ENCODE measurements at regions of chr12 and their contacts with region 1.

Region 1: DNA sequence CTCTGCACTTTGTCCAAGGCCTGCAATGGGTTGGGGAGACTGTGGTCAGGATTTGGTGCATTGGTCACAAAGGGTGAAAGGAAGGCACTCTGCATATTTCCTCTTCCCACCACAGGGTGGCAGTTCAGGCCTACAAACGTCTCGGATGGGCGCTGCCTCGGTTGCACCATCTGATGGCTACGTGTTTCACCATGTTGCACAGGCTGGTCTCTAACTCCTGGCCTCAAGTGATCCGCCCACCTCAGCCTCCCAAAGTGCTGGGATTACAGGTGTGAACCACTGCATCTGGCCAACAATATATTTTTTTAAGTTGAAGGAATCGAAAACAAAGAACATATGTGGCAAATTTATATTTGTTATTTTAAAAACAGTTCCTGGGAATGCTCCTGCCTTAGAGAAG is 35.1 kb downstream of the TMBIM6 start:
- DNase-seq: peak; percentile 72
- ATAC-seq: peak; percentile 91
- H3K4me3 ChIP-seq: no peak overlapping the region
- H3K27ac ChIP-seq: no peak overlapping the region
- H3K4me1 ChIP-seq: peaks cover 0 to 9% of the 10 kb centered on the region in 2 experiments; a peak in 3 of 4 replicates
- H3K27me3 ChIP-seq: peaks cover 4% of the 10 kb centered on the region; the same call in 1 of the 2 replicates
- CTCF ChIP-seq: peak; percentile 79 to 93 (median 80)
- POLR2A ChIP-seq: no peak
- RAD21 ChIP-seq: peak; percentile 95

Region 2: DNA sequence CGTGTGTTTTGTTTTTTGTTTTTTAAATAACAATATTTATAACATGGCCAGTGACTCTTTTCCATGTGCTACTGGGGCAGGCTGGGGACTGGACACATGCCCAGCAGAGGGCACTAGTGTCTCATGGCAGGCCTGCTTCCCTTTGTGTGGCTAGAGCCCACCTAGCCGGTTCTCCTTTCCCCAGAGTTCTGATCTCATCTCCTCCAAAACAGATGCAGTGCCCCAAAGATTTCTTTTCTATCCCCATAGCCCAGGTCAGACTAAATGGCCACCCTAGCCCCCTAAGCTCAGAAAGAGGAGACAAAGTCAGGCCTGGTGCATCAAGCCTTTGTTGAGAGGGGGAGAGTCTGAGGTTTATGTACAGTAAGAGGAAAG is 131.8 kb before region 1 on chr12:
- CTCF ChIA-PET with region 1: interaction called, 5 read pairs
- POLR2A ChIA-PET with region 1: no interaction called
- RAD21 ChIA-PET with region 1: interaction called in 1 of 2 experiments, 3 read pairs
- intact Hi-C with region 1: loop called (anchors 1 kb)
- DNase-seq: peak; percentile 21
- ATAC-seq: peak; percentile 87
- H3K4me3 ChIP-seq: no peak overlapping the region
- H3K27ac ChIP-seq: no peak overlapping the region
- H3K4me1 ChIP-seq: peaks cover 0 to 4% of the 10 kb centered on the region in 2 experiments; a peak in 2 of 4 replicates
- H3K27me3 ChIP-seq: no peaks in the 10 kb centered on the region
- CTCF ChIP-seq: peak; percentile 89 to 96 (median 90)
- POLR2A ChIP-seq: no peak
- RAD21 ChIP-seq: peak; percentile 95

Region 3: GRCh38 chr12:49787672-49788071 is 11.3 kb after region 1 on chr12:
- CTCF ChIA-PET with region 1: interaction called, 10 read pairs
- POLR2A ChIA-PET with region 1: interaction called, 4 read pairs
- RAD21 ChIA-PET with region 1: no interaction called
- intact Hi-C with region 1: no loop called
- DNase-seq: no peak
- ATAC-seq: no peak
- H3K4me3 ChIP-seq: no peak overlapping the region
- H3K27ac ChIP-seq: no peak overlapping the region
- H3K4me1 ChIP-seq: peaks cover 0 to 9% of the 10 kb centered on the region in 2 experiments; a peak in 2 of 4 replicates
- H3K27me3 ChIP-seq: no peaks in the 10 kb centered on the region
- CTCF ChIP-seq: no peak
- POLR2A ChIP-seq: no peak
- RAD21 ChIP-seq: no peak

Region 4: GRCh38 chr12:49838973-49839633 is 62.7 kb after region 1 on chr12:
- CTCF ChIA-PET with region 1: interaction called, 28 read pairs
- POLR2A ChIA-PET with region 1: interaction called, 6 read pairs
- RAD21 ChIA-PET with region 1: interaction called in 1 of 2 experiments, 3 read pairs
- intact Hi-C with region 1: loop called (anchors 1 kb)
- DNase-seq: peak; percentile 22
- ATAC-seq: peak; percentile 30; the same call in 1 of the 2 replicates
- H3K4me3 ChIP-seq: no peak overlapping the region
- H3K27ac ChIP-seq: no peak overlapping the region
- H3K4me1 ChIP-seq: peaks cover 12 to 19% of the 10 kb centered on the region in 2 experiments; a peak in 3 of 4 replicates
- H3K27me3 ChIP-seq: no peaks in the 10 kb centered on the region
- CTCF ChIP-seq: peak; percentile 61 to 84 (median 66); a peak in 5 of 6 replicates
- POLR2A ChIP-seq: no peak
- RAD21 ChIP-seq: peak; percentile 85

Region 5: DNA sequence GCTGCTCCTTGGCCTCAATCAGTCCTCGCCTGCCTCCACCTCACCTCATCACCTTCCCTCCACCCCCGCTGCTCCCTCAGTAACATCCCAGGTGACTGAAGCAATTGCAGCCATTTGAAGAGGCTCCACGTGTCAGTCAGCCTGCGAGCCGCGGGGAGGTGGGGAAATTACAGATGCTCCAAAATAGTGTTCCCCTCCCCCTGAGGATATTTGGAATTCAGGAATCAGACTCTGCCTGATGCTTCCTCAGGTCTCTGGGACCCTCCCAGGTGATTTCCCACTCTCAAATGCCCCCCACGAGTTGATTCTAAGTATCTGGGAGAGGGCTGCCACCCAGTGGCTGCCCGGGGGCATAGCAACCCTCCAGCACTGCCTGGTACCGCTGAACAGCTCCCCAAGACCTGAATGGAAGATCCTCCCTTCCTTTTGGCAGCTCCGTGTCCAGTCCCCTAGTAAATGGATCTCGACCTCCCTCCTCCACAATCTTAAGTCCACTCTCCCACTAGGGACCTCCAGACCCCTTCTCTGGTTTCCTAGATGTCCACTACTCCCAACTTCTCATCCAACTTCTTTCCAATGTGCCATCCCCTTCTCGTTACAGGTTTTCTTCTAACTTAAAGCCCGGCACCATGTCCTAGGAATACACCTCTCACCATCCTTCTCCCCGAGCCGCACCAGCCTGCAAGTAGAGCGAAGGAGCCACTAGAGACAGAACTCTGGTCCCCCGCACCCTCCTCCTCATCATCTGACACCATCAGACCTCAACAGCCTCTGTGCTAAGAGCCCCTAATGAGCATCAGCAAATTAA is 279.6 kb after region 1 on chr12:
- CTCF ChIA-PET with region 1: interaction called, 11 read pairs
- POLR2A ChIA-PET with region 1: no interaction called
- RAD21 ChIA-PET with region 1: no interaction called
- intact Hi-C with region 1: loop called (anchors 1 kb)
- DNase-seq: peak; percentile 48
- ATAC-seq: peak; percentile 61
- H3K4me3 ChIP-seq: no peak overlapping the region
- H3K27ac ChIP-seq: no peak overlapping the region; the same call in 1 of the 2 replicates
- H3K4me1 ChIP-seq: peaks cover 15 to 25% of the 10 kb centered on the region in 2 experiments; a peak in 3 of 4 replicates
- H3K27me3 ChIP-seq: no peaks in the 10 kb centered on the region; the same call in 1 of the 2 replicates
- CTCF ChIP-seq: peak; percentile 91 to 98 (median 96)
- POLR2A ChIP-seq: no peak
- RAD21 ChIP-seq: peak; percentile 90

Region 6: GRCh38 chr12:50074936-50075807 is 298.8 kb after region 1 on chr12:
- CTCF ChIA-PET with region 1: interaction called, 9 read pairs
- POLR2A ChIA-PET with region 1: no interaction called
- RAD21 ChIA-PET with region 1: no interaction called
- intact Hi-C with region 1: loop called (anchors 2 kb)
- DNase-seq: peak; percentile 42
- ATAC-seq: peak; percentile 95
- H3K4me3 ChIP-seq: no peak overlapping the region
- H3K27ac ChIP-seq: no peak overlapping the region
- H3K4me1 ChIP-seq: peaks cover 0 to 14% of the 10 kb centered on the region in 2 experiments; a peak in 1 of 4 replicates
- H3K27me3 ChIP-seq: no peaks in the 10 kb centered on the region
- CTCF ChIP-seq: peak; percentile 81 to 93 (median 91)
- POLR2A ChIP-seq: no peak
- RAD21 ChIP-seq: peak; percentile 97

Region 7: GRCh38 chr12:50187084-50187900 is 410.9 kb after region 1 on chr12:
- CTCF ChIA-PET with region 1: no interaction called
- POLR2A ChIA-PET with region 1: no interaction called
- RAD21 ChIA-PET with region 1: no interaction called
- intact Hi-C with region 1: loop called (anchors 10 kb)
- DNase-seq: no peak
- ATAC-seq: no peak
- H3K4me3 ChIP-seq: no peak overlapping the region
- H3K27ac ChIP-seq: no peak overlapping the region
- H3K4me1 ChIP-seq: no peaks in the 10 kb centered on the region
- H3K27me3 ChIP-seq: no peaks in the 10 kb centered on the region
- CTCF ChIP-seq: no peak
- POLR2A ChIP-seq: no peak
- RAD21 ChIP-seq: no peak